ENCODE measurements at regions of chr1 and their contacts with region 1.

Region 1: GRCh38 chr1:32291708-32292492 is at the start of gene HDAC1:
- DNase-seq: peak; percentile 91
- ATAC-seq: peak; percentile 98
- H3K4me3 Mint-ChIP-seq: peak within 1 kb of the TSS; percentile 100
- H3K27ac Mint-ChIP-seq: peak within 1 kb of the TSS; percentile 98
- H3K4me1 Mint-ChIP-seq: peaks cover 48% of the 10 kb centered on the region
- H3K27me3 Mint-ChIP-seq: no peaks in the 10 kb centered on the region
- CTCF ChIP-seq: no peak
- total RNA-seq, gene HDAC1: 204 and 212 TPM in 2 replicates

Region 2: DNA sequence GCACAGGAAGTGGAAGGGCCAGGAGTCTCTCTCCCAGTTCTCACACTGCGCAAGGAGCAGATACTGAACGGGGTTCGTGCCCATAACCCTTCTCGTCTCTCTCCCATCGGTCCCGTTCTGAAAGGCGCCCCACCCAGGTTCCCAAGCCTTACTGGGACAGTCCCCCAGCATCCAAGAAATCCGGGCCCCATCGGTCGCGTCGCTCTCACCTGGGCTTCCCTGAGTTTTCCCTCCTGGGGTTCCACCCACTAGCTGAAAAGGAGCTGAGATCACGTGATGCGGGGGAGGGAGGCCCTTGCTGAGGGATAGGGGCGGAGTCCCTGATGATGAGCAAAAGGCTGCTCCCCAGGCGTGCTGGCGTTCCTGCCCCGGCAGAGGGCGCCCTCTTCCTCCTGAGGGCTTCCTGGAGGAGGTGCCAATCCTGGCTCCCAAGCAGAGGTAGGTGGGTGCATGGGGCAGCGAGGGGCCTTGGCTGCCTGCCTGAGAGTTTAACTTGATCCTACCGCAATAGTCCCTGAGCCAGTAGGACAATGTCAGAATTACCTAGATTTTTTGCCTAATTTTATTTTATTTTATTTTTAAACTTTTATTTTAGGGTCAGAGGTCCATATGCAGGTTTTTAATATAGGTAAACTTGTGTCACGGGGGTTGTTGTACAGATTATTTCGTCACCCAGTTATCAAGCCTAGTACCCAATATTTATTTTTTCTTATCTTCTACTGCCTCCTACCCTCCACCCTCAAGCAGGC is 476.0 kb before region 1 on chr1 and contains the start of gene SPOCD1:
- CTCF ChIA-PET with region 1: no interaction called
- POLR2A ChIA-PET with region 1: no interaction called
- intact Hi-C with region 1: no loop called
- DNase-seq: peak; percentile 55
- ATAC-seq: peak; percentile 81
- H3K4me3 Mint-ChIP-seq: no peak within 1 kb of the TSS
- H3K27ac Mint-ChIP-seq: no peak within 1 kb of the TSS
- H3K4me1 Mint-ChIP-seq: peaks cover 26% of the 10 kb centered on the region
- H3K27me3 Mint-ChIP-seq: no peaks in the 10 kb centered on the region
- CTCF ChIP-seq: no peak
- total RNA-seq, gene SPOCD1: not detected in 2 replicates

Region 3: DNA sequence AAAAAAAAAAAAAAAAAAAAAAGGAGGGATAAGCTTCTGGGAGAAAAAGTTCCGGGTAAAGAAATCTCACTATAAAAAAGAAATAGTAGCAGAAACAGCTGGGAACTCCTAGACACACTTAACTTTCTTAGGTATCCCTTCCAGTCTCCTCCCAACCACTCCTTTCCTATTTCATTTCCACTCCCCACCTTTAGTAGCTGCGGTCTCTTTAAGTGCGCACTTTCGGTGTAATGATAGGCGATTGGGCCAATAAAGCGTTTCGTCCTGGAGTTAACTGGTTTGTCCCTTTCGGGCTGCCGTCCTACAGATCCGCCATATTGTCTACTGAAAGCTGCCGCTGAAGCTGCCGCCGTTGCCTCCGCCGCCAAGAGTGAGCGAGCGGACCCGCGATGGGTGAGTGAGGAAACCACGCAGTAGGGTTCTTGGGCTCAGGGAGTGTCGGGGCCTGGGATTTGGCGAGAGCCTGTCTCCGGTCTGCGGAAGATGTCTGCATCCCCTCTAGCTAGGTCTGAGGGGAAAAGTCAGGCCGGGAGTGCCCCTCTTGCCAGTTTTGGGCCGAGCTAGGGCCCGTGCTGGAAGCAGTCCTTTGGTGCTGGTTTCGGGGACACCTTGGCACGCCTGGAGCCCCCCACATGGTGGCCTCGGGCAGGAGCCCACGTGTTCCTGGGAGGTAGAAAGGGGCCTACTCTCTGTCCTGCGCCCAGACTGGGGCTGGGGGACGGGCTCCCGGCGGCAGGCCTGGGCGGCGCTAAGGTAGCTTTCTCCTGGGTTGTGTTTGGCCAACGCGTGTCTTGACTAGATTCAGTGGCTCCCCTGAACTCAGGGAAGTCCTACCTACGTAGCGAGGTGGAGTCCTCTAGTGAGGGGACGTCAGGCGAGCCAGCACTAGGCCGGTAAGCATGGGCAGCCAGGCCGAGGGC is 183.9 kb before region 1 on chr1 and contains the start of gene KPNA6:
- CTCF ChIA-PET with region 1: no interaction called
- POLR2A ChIA-PET with region 1: interaction called, 4 read pairs
- intact Hi-C with region 1: loop called (anchors 5 kb)
- DNase-seq: peak; percentile 78
- ATAC-seq: peak; percentile 83
- H3K4me3 Mint-ChIP-seq: peak within 1 kb of the TSS; percentile 99
- H3K27ac Mint-ChIP-seq: peak within 1 kb of the TSS; percentile 98
- H3K4me1 Mint-ChIP-seq: peaks cover 48% of the 10 kb centered on the region
- H3K27me3 Mint-ChIP-seq: no peaks in the 10 kb centered on the region
- CTCF ChIP-seq: no peak
- total RNA-seq, gene KPNA6: 58.7 and 60.3 TPM in 2 replicates

Region 4: DNA sequence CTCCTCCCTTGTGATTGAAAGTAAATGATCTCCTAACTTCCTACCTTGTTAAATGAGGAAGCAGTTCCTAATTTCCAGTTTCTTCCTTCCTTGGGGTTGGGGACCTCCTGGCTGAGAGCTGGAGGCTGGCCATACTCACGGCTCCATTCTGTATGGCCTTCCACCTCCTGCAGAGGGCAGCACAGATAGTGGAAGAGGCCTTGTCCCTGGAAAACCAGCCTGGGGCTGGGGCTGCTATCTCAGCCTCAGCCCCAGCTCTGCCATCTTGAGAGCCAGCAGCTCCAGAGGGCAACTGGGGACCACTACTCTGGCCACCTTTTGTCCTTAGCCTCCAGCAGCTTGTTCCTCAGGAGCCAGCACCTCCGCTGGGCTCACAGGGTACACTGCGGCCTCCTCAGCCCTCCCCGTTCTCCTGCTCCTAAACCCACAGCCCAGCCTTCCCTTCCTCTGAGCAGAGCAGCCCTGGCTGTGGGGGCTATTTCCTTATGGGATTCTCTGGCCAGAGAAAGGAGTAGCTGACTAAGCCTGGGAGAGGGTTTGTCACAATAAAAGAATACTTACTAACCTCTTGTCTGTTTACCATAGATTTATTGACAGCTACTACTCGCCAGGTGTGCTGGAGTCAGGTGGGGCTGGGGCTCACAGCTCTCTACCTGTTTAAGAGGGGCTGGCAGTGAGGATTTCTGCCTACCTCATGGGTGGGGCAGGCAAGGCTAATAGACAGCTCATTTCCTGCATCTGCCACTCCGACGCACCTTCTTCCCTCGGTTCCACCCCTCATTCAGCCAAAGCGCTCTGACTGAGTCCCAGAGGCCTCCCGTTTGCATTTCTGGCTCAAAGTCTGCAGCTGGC is 76.0 kb before region 1 on chr1:
- CTCF ChIA-PET with region 1: interaction called, 6 read pairs
- POLR2A ChIA-PET with region 1: interaction called, 17 read pairs
- intact Hi-C with region 1: no loop called
- DNase-seq: no peak
- ATAC-seq: peak; percentile 93
- H3K4me3 Mint-ChIP-seq: no peak overlapping the region
- H3K27ac Mint-ChIP-seq: no peak overlapping the region
- H3K4me1 Mint-ChIP-seq: peaks cover 21% of the 10 kb centered on the region
- H3K27me3 Mint-ChIP-seq: no peaks in the 10 kb centered on the region
- CTCF ChIP-seq: peak; percentile 44

Region 5: GRCh38 chr1:32247983-32248889 is 43.7 kb before region 1 on chr1:
- CTCF ChIA-PET with region 1: interaction called, 27 read pairs
- POLR2A ChIA-PET with region 1: interaction called, 107 read pairs
- intact Hi-C with region 1: loop called (anchors 1 kb)
- DNase-seq: peak; percentile 71
- ATAC-seq: peak; percentile 13
- H3K4me3 Mint-ChIP-seq: peak overlapping the region; percentile 45
- H3K27ac Mint-ChIP-seq: peak overlapping the region; percentile 81
- H3K4me1 Mint-ChIP-seq: peaks cover 70% of the 10 kb centered on the region
- H3K27me3 Mint-ChIP-seq: no peaks in the 10 kb centered on the region
- CTCF ChIP-seq: no peak

Region 6: GRCh38 chr1:32321712-32322291 is 29.9 kb after region 1 on chr1:
- CTCF ChIA-PET with region 1: interaction called, 3 read pairs
- POLR2A ChIA-PET with region 1: interaction called, 31 read pairs
- intact Hi-C with region 1: loop called (anchors 2 kb)
- DNase-seq: no peak
- ATAC-seq: peak; percentile 47
- H3K4me3 Mint-ChIP-seq: peak overlapping the region; percentile 68
- H3K27ac Mint-ChIP-seq: peak overlapping the region; percentile 89
- H3K4me1 Mint-ChIP-seq: peaks cover 71% of the 10 kb centered on the region
- H3K27me3 Mint-ChIP-seq: no peaks in the 10 kb centered on the region
- CTCF ChIP-seq: no peak

Region 7: DNA sequence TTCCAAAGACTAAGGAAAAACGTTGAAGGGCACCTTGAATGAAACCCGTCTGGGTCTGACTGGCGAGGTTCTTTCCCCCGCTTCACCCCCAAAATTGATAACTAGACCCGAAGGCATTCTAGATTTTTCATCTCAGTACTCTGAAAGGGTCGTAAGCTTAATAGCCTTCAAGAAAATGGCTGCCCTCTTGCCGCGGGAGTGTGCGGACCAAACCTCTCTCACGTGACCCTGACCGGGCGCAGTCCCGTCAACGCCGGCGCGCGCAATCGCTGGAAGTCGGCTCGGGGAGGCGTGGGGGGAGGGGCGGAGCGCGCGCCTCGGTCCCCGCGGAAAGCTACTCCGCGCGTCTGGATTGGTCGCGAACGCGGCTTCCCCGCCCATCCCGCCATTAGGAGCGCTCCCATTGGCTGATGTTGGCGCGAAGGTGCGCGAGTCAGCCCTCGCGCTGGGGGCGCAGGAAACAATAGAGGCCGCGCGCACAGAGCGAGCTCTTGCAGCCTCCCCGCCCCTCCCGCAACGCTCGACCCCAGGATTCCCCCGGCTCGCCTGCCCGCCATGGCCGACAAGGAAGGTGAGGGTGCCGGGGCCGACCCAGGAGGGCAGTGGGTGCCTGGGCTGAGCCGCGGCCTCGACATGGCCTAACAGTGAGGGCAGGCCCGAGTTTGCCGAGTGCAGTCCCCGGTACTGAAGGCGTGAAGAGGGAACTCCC is 359.0 kb after region 1 on chr1 and contains the start of gene RBBP4:
- CTCF ChIA-PET with region 1: no interaction called
- POLR2A ChIA-PET with region 1: no interaction called
- intact Hi-C with region 1: loop called (anchors 2 kb)
- DNase-seq: peak; percentile 99
- ATAC-seq: peak; percentile 82
- H3K4me3 Mint-ChIP-seq: peak within 1 kb of the TSS; percentile 97
- H3K27ac Mint-ChIP-seq: peak within 1 kb of the TSS; percentile 100
- H3K4me1 Mint-ChIP-seq: peaks cover 70% of the 10 kb centered on the region
- H3K27me3 Mint-ChIP-seq: no peaks in the 10 kb centered on the region
- CTCF ChIP-seq: no peak
- total RNA-seq, gene RBBP4: 228 and 241 TPM in 2 replicates